ENCODE measurements at regions of chr10 and their contacts with region 1.

Region 1: GRCh38 chr10:75226656-75227055 is 9.1 kb downstream of the COMTD1 start:
- DNase-seq: no peak
- ATAC-seq: no peak
- H3K4me3 ChIP-seq: no peak overlapping the region
- H3K27ac ChIP-seq: peak overlapping the region in 1 of 2 experiments; percentile 32; a peak in 3 of 6 replicates
- H3K4me1 ChIP-seq: peaks cover 84% of the 10 kb centered on the region
- CTCF ChIP-seq: no peak
- EP300 ChIP-seq: no peak
- POLR2A ChIP-seq: no peak
- RAD21 ChIP-seq: no peak

Region 2: DNA sequence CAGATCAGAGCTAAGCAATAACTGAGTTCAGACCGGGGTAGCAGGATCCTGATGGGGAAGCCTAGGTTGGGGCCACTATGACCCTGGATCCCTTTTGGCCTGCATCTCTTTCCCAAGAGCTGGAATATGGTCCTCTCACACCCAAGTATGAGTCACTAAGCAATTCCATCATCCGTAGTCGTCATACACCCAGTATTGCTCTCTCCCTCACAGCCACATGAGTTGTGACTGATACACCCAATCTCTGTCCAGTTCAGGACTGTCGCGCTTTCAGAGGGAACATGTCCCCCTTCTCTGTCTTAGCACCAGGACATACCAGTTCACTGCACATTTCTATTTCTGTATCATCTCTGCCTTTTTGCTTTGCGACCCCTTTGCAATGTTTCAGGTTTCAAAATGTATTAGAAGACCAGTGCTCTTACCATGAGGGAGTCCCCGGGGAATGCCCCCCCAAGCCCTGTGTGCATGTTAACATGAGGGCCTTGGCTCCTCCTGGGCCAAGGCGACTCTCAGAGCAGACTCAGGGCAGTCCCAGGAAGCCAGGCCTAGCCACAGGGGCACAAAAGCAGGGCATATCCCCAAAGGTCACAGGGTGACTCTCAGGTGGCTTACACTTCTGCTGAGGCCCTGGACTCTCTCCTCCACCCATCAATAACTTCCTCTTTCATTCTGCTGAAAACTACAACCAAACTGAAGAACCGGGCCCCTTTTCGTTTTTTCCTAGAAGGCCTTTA is 190.5 kb before region 1 on chr10:
- CTCF ChIA-PET with region 1: no interaction called
- POLR2A ChIA-PET with region 1: no interaction called
- DNase-seq: no peak
- ATAC-seq: peak; percentile 32 to 55; a peak in 4 of 6 replicates
- H3K4me3 ChIP-seq: no peak overlapping the region
- H3K27ac ChIP-seq: no peak overlapping the region
- H3K4me1 ChIP-seq: no peaks in the 10 kb centered on the region
- CTCF ChIP-seq: no peak
- EP300 ChIP-seq: no peak
- POLR2A ChIP-seq: no peak
- RAD21 ChIP-seq: no peak

Region 3: GRCh38 chr10:75210282-75211006 is 16.2 kb before region 1 on chr10 and contains the start of gene VDAC2:
- CTCF ChIA-PET with region 1: interaction called, 119 read pairs
- POLR2A ChIA-PET with region 1: interaction called, 32 read pairs
- DNase-seq: peak; percentile 77 to 93
- ATAC-seq: peak; percentile 85 to 88
- H3K4me3 ChIP-seq: peak within 1 kb of the TSS; percentile 83
- H3K27ac ChIP-seq: peak within 1 kb of the TSS; percentile 99
- H3K4me1 ChIP-seq: peaks cover 57% of the 10 kb centered on the region
- CTCF ChIP-seq: no peak
- EP300 ChIP-seq: peak in 1 of 2 experiments; percentile 29; a peak in 1 of 5 replicates
- POLR2A ChIP-seq: peak; percentile 67
- RAD21 ChIP-seq: no peak; a peak in 2 of 5 replicates
- polyA plus RNA-seq, gene VDAC2: 262 and 285 TPM in 2 replicates